ENCODE measurements at regions of chr20 and their contacts with region 1.

Region 1: GRCh38 chr20:50308513-50309279 is 118.1 kb downstream of the CEBPB start:
- DNase-seq: peak; percentile 96 to 98
- H3K4me3 ChIP-seq: no peak overlapping the region
- H3K27ac ChIP-seq: peak overlapping the region; percentile 79 to 92
- H3K4me1 ChIP-seq: peaks cover 0 to 91% (median 80%) of the 10 kb centered on the region in 4 donors
- H3K27me3 ChIP-seq: no peaks in the 10 kb centered on the region
- CTCF ChIP-seq: no peak

Region 2: DNA sequence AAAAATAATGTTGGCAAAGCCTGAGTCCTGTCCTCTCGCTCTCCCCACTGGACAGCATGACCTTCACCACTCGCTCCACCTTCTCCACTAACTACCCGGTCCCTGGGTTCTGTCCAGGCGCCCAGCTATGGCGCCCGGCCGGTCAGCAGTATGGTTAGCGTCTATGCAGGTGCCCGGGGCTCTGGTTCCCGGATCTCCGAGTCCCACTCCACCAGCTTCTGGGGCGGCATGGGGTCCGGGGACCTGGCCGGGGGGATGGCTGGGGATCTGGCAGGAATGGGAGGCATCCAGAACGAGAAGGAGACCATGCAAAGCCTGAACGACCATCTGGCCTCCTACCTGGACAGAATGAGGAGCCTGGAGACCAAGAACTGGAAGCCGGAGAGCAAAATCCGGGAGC is 352.0 kb before region 1 on chr20:
- intact Hi-C with region 1: no loop called
- DNase-seq: no peak
- H3K4me3 ChIP-seq: no peak overlapping the region
- H3K27ac ChIP-seq: no peak overlapping the region
- H3K4me1 ChIP-seq: no peaks in the 10 kb centered on the region
- H3K27me3 ChIP-seq: no peaks in the 10 kb centered on the region
- CTCF ChIP-seq: no peak

Region 3: GRCh38 chr20:50395258-50395729 is 86.6 kb after region 1 on chr20:
- intact Hi-C with region 1: loop called (anchors 5 kb)
- DNase-seq: peak; percentile 95 to 99
- H3K4me3 ChIP-seq: no peak overlapping the region
- H3K27ac ChIP-seq: peak overlapping the region; percentile 87 to 96
- H3K4me1 ChIP-seq: peaks cover 0 to 77% (median 60%) of the 10 kb centered on the region in 4 donors
- H3K27me3 ChIP-seq: no peaks in the 10 kb centered on the region
- CTCF ChIP-seq: peak in 1 of 2 experiments; percentile 21

Region 4: DNA sequence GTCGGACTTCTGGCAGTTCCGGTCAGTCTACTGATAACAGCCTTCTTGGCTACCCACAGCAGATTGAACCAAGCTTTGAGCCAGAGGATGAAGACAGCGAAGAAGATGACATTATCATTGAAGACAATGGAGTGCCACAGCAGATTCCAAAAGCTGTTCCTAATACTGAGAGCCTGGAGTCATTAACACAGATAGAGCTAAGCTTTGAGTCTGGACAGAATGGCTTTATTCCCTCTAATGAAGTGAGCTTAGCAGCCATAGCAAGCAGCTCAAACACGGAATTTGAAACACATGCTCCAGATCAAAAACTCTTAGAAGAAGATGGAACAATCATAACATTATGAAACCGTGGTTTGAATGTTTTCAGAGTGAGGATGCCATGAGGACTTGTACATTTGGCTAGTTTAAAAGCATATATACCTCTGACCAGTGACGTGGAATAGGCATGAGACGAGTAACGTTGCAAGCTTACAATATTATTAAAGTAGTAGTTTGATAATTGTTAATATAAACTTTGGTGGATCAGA is 441.5 kb after region 1 on chr20:
- intact Hi-C with region 1: no loop called
- DNase-seq: no peak
- H3K4me3 ChIP-seq: no peak overlapping the region
- H3K27ac ChIP-seq: no peak overlapping the region
- H3K4me1 ChIP-seq: no peaks in the 10 kb centered on the region
- H3K27me3 ChIP-seq: no peaks in the 10 kb centered on the region
- CTCF ChIP-seq: no peak

Region 5: GRCh38 chr20:50815162-50815989 is 506.7 kb after region 1 on chr20:
- intact Hi-C with region 1: no loop called
- DNase-seq: peak; percentile 39 to 80
- H3K4me3 ChIP-seq: no peak overlapping the region
- H3K27ac ChIP-seq: peak overlapping the region; percentile 70 to 76
- H3K4me1 ChIP-seq: peaks cover 0 to 35% (median 21%) of the 10 kb centered on the region in 4 donors
- H3K27me3 ChIP-seq: no peaks in the 10 kb centered on the region
- CTCF ChIP-seq: no peak

Measured in tibial artery (tissue), 4 donors.